HepG2 (cell line): ENCODE measurements at regions of chr2 and their contacts with region 1.

Region 1: GRCh38 chr2:72770879-72771461 is 54.9 kb downstream of the EXOC6B start:
- DNase-seq: peak; percentile 83
- ATAC-seq: peak; percentile 56; the same call in 2 of the 3 replicates
- H3K4me3 ChIP-seq: no peak overlapping the region
- H3K27ac ChIP-seq: no peak overlapping the region
- H3K4me1 ChIP-seq: peaks cover 10% of the 10 kb centered on the region
- H3K27me3 ChIP-seq: no peaks in the 10 kb centered on the region
- CTCF ChIP-seq: peak; percentile 88
- EP300 ChIP-seq: no peak
- POLR2A ChIP-seq: no peak
- RAD21 ChIP-seq: peak; percentile 89

Region 2: DNA sequence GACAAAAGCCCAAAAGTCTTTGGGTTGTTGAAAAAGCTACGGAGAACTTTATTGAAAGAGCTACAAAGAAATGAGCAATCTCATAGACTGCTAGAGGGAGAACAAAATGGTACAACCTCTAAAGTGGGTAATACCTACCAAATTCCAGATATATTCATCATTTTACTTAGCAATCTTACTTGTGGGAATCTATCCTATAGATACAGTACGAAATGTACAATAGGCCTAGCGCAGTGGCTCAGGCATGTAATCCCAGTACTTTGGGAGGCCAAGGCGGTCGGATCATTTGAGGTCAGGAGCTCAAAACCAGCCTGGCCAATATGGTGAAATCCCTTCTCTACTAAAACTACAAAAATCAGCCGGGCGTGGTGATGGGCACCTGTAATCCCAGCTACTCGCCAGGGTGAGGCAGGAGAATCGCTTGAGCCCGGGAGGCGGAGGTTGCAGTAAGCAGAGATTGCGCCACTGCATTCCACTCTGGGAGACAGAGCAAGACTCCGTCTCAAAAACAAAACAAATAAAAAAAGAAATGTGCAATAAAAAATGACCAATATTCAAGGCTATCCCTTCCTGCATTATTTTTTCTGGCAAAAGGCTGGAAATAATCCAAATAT is 44.8 kb after region 1 on chr2:
- CTCF ChIA-PET with region 1: interaction called, 4 read pairs
- POLR2A ChIA-PET with region 1: no interaction called
- in situ Hi-C with region 1: no loop called
- intact Hi-C with region 1: loop called (anchors 5 kb)
- DNase-seq: peak; percentile 83
- ATAC-seq: peak; percentile 80
- H3K4me3 ChIP-seq: no peak overlapping the region
- H3K27ac ChIP-seq: no peak overlapping the region
- H3K4me1 ChIP-seq: peaks cover 8% of the 10 kb centered on the region; the same call in 1 of the 2 replicates
- H3K27me3 ChIP-seq: no peaks in the 10 kb centered on the region
- CTCF ChIP-seq: peak; percentile 73
- EP300 ChIP-seq: 0 out of 4 replicates have a peak, but pooled peaks of 1 of the 2 experiments have one; percentile 27
- POLR2A ChIP-seq: no peak
- RAD21 ChIP-seq: peak; percentile 80

Region 3: DNA sequence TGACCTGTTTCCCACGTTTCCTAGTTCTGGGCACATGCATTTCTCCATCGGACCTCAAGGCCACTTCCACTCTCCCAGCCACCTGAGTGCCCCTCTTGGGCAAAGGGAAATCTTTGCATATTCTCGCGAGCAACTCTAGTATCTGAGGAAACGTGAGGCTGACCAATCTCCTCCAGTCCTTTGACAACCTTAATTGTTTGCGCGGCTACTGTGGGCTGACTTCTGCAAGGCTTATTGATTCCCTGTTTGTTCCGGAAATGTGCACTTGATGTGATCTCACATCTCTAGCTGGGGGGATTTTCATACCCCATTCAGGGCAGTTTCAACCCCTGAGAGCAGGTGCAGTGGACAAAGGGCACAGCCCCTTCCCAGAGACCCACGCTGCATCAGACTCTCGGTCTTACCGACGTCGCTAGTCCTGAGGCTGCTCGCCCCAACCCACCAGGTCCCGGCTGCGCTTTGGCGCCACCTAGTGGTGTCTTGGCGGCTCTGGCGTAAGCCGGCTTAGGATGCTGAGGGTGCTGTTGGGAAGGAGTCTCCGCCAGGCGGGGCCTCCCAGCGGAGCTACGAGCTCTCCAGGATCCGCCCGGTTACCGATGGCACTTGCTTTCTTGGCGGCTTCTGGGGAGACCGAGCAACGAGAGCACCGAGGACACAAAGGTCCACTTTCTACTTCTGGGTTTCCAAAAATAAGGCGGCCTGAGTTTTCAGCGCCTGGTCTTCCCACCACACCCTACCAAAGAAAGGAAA is 91.4 kb after region 1 on chr2:
- CTCF ChIA-PET with region 1: interaction called, 121 read pairs
- POLR2A ChIA-PET with region 1: no interaction called
- in situ Hi-C with region 1: loop called (anchors 5 kb)
- intact Hi-C with region 1: loop called (anchors 1 kb)
- DNase-seq: peak; percentile 82
- ATAC-seq: peak; percentile 99
- H3K4me3 ChIP-seq: peak overlapping the region; percentile 31 to 60 (median 51)
- H3K27ac ChIP-seq: no peak overlapping the region
- H3K4me1 ChIP-seq: peaks cover 12% of the 10 kb centered on the region
- H3K27me3 ChIP-seq: peaks cover 0 to 30% of the 10 kb centered on the region in 2 experiments; a peak in 3 of 5 replicates
- CTCF ChIP-seq: peak; percentile 100
- EP300 ChIP-seq: no peak; a peak in 1 of 4 replicates
- POLR2A ChIP-seq: no peak
- RAD21 ChIP-seq: peak; percentile 94

Region 4: DNA sequence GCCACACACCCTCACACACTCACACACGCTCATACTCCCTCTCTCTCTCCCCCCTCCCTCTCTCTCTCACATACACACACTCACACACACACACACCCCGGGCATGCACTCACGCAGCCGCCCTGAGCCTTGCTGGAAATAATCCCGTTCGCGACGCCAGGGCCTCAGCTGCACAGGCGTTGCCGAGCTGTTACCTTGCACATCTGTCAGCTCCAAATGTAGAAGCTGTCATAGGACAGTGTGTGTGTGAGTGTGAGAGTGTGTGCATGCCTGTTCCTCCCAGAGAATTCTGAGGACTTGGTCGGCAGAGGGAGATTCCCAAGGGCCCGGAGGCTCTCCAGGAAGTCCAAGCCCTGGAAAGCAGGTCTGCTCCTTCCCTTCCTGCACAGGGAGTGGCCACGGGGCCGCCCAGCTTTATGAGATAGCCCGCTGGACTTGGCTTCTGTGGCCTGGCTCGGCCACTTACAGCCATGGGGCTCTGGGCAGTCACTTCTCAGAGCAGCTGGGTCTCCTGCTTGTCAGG is 124.8 kb after region 1 on chr2:
- CTCF ChIA-PET with region 1: no interaction called
- POLR2A ChIA-PET with region 1: no interaction called
- in situ Hi-C with region 1: no loop called
- intact Hi-C with region 1: no loop called
- DNase-seq: no peak
- ATAC-seq: peak; percentile 46
- H3K4me3 ChIP-seq: peak overlapping the region in 2 of 3 experiments; percentile 34 to 47; a peak in 3 of 6 replicates
- H3K27ac ChIP-seq: no peak overlapping the region
- H3K4me1 ChIP-seq: peaks cover 21% of the 10 kb centered on the region
- H3K27me3 ChIP-seq: peaks cover 12 to 59% of the 10 kb centered on the region in 2 experiments
- CTCF ChIP-seq: peak; percentile 19; the same call in 1 of the 2 replicates
- EP300 ChIP-seq: no peak
- POLR2A ChIP-seq: no peak
- RAD21 ChIP-seq: no peak